SK-N-SH (cell line): ENCODE measurements at regions of chr17 and their contacts with region 1.

Region 1: DNA sequence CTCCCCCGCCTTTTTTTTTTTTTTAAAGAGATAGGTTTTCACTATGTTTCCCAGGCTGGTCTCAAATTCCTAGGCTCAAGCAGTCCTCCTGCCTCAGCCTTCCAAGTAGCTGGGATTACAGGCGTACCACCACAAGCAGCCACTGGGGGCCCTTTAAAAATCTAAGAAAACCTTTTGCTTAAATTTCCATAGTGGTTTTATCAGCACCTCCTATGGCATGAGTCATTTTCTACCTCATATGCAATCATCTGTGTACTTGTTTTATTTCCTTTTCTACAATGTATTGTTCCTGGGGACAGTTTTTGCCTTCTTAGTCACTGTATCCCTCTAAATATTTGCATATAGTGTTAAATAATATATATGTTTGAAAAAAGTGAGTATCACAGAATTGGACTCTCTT is 29.2 kb downstream of the GNA13 start:
- DNase-seq: peak; percentile 52
- H3K4me3 ChIP-seq: no peak overlapping the region
- H3K27ac ChIP-seq: peak overlapping the region in 1 of 2 experiments; percentile 25; a peak in 1 of 4 replicates
- H3K4me1 ChIP-seq: peaks cover 4 to 18% of the 10 kb centered on the region in 2 experiments
- H3K27me3 ChIP-seq: no peaks in the 10 kb centered on the region
- CTCF ChIP-seq: peak; percentile 68
- EP300 ChIP-seq: no peak
- RAD21 ChIP-seq: no peak

Region 2: DNA sequence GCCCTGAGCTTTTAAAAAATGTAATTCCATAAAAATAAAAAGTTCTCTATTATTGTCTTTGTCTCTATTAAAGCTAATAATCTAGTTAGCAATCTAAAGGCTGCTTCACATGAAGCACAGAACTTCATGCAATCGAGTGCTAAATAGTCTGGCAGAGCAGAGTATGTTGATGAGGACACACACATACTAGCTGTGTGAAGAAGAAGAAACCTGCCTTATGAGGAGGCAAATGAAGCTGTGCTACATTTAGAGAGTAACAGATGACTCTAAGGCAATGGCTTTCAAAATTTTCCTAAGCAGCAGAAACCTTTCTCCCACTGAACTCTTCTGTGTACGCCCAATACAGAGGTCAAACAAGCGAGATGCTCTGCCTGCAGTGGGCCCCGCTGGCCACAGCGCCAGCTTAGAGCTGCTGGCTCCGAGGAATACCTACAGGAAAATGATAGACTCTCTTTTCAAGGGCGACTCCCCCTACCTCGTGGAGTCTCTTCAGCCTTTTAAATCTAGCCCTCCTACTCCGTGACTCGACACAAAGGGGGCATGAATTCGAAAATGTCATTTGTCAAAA is 10.0 kb before region 1 on chr17:
- CTCF ChIA-PET with region 1: interaction called, 14 read pairs
- POLR2A ChIA-PET with region 1: no interaction called
- DNase-seq: no peak
- H3K4me3 ChIP-seq: no peak overlapping the region
- H3K27ac ChIP-seq: peak overlapping the region in 1 of 2 experiments; percentile 23; a peak in 1 of 4 replicates
- H3K4me1 ChIP-seq: peaks cover 20 to 25% of the 10 kb centered on the region in 2 experiments
- H3K27me3 ChIP-seq: no peaks in the 10 kb centered on the region
- CTCF ChIP-seq: no peak
- EP300 ChIP-seq: no peak
- RAD21 ChIP-seq: no peak

Region 3: GRCh38 chr17:65130832-65131231 is 103.5 kb after region 1 on chr17:
- CTCF ChIA-PET with region 1: no interaction called
- POLR2A ChIA-PET with region 1: no interaction called
- DNase-seq: no peak
- H3K4me3 ChIP-seq: no peak overlapping the region
- H3K27ac ChIP-seq: no peak overlapping the region
- H3K4me1 ChIP-seq: 0 out of 4 replicates have a peak, but pooled peaks cover 0 to 4% of the 10 kb centered on the region in 2 experiments
- H3K27me3 ChIP-seq: peaks cover 6% of the 10 kb centered on the region; the same call in 1 of the 2 replicates
- CTCF ChIP-seq: no peak
- EP300 ChIP-seq: no peak
- RAD21 ChIP-seq: no peak

Region 4: GRCh38 chr17:65163990-65164495 is 136.7 kb after region 1 on chr17:
- CTCF ChIA-PET with region 1: no interaction called
- POLR2A ChIA-PET with region 1: no interaction called
- DNase-seq: no peak
- H3K4me3 ChIP-seq: no peak overlapping the region
- H3K27ac ChIP-seq: no peak overlapping the region
- H3K4me1 ChIP-seq: peaks cover 0 to 7% of the 10 kb centered on the region in 2 experiments; a peak in 1 of 4 replicates
- H3K27me3 ChIP-seq: no peaks in the 10 kb centered on the region
- CTCF ChIP-seq: no peak
- EP300 ChIP-seq: no peak
- RAD21 ChIP-seq: no peak